ENCODE measurements at regions of chr10 and their contacts with region 1.

Region 1: DNA sequence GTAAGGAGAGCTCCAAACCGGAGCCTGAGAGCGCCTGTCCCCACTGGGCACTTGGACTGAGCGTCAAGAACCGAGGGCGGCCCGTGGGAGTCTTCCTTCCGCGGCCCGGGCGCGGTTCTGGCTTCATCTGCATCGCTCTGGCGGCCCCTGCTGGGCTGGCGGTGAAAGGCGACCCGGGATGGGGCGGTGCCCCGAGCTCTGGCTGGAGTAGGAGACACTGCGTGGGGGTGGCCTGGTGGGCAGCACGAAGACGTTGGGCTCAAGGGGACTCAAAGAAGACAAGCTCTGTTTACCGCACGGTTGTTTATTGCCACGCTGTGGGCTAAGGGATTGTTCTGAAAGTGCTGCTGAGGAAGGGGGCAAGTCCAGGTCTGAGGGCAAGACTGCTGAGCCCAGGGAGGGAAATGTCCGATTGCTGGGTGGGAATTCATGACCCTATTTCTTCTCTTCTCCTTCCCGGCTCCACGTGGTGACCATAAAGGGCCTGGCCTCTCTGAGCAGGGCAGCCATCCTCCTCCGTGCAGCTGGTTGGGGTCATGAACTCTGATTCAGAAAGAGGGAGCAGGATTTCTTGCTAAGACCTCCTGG is 29.8 kb downstream of the PLAU start:
- DNase-seq: no peak
- ATAC-seq: peak; percentile 100
- H3K4me3 ChIP-seq: no peak overlapping the region
- H3K27ac ChIP-seq: no peak overlapping the region
- H3K4me1 ChIP-seq: no peaks in the 10 kb centered on the region
- H3K27me3 ChIP-seq: no peaks in the 10 kb centered on the region
- CTCF ChIP-seq: peak; percentile 92 to 99 (median 97)
- EP300 ChIP-seq: no peak
- POLR2A ChIP-seq: no peak
- RAD21 ChIP-seq: peak; percentile 98

Region 2: GRCh38 chr10:73865459-73866442 is 75.0 kb before region 1 on chr10:
- CTCF ChIA-PET with region 1: interaction called, 10 read pairs
- POLR2A ChIA-PET with region 1: no interaction called
- RAD21 ChIA-PET with region 1: no interaction called
- SMC1A ChIA-PET with region 1: interaction called, 3 read pairs
- in situ Hi-C with region 1: no loop called
- intact Hi-C with region 1: no loop called
- DNase-seq: no peak
- ATAC-seq: peak; percentile 95
- H3K4me3 ChIP-seq: peak overlapping the region; percentile 58; the same call in 1 of the 2 replicates
- H3K27ac ChIP-seq: peak overlapping the region; percentile 84
- H3K4me1 ChIP-seq: peaks cover 24% of the 10 kb centered on the region
- H3K27me3 ChIP-seq: no peaks in the 10 kb centered on the region
- CTCF ChIP-seq: peak in 1 of 3 experiments; percentile 14; a peak in 1 of 6 replicates
- EP300 ChIP-seq: 0 out of 4 replicates have a peak, but pooled peaks of 1 of the 2 experiments have one; percentile 33
- POLR2A ChIP-seq: no peak
- RAD21 ChIP-seq: no peak

Region 3: DNA sequence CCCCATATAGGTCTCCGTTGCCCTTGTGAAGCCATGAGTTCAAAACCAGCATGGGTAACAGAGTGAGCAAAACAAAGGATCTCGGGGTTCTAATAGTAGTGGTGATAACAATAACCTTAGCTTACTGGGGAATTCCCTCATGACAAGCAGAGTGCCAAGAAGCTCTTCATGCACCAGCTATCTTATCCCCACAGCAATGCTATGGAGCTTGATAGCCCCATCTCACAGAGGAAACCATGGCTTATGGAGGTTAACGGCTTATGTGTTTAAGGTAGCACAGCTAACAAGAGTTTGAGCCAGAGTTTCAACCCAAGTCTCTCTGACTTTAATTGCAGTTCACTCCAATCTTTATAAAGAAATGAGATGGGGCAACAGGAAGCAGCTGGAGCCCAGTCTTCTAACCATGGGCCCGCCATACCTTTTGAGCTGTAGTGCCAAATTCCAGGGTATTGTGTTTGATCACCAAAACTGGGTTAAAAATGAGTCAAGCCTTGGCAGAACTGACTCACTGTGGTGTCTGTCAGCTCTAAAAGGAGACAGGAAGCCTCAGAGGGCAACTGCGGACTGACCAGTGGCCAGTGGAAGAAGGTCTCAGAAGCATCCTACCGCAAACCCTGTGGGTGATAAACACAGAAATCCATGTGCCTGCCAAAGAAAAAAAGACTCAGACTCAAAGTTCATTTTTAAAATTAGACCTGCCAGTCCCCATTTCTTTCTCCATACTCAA is 46.3 kb before region 1 on chr10:
- CTCF ChIA-PET with region 1: interaction called, 930 read pairs
- POLR2A ChIA-PET with region 1: interaction called, 32 read pairs
- RAD21 ChIA-PET with region 1: interaction called, 616 read pairs
- SMC1A ChIA-PET with region 1: interaction called, 1,048 read pairs
- in situ Hi-C with region 1: loop called (anchors 5 kb)
- intact Hi-C with region 1: no loop called
- DNase-seq: no peak
- ATAC-seq: peak; percentile 87
- H3K4me3 ChIP-seq: no peak overlapping the region
- H3K27ac ChIP-seq: no peak overlapping the region
- H3K4me1 ChIP-seq: no peaks in the 10 kb centered on the region
- H3K27me3 ChIP-seq: no peaks in the 10 kb centered on the region
- CTCF ChIP-seq: no peak
- EP300 ChIP-seq: no peak
- POLR2A ChIP-seq: no peak
- RAD21 ChIP-seq: no peak

Region 4: DNA sequence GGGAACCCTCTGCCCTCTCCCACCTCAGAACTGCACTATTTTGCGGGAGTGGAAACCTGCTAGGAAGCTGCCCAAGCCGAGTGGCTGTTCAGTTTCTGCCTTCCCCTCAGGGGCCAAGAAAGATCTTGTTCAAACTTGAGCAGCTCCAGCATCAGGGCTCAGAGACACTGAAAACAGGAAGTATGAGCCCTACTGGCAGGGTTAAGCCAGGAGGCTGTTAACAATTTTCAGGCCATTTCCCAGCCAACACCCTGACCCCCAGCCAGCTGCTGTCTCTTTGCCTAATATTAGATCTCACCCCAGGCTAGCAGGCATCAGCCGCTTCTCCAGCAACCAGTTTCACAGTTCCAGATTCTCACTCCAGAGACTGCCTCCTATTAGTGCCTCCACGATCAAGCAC is 20.6 kb before region 1 on chr10:
- CTCF ChIA-PET with region 1: interaction called, 35 read pairs
- POLR2A ChIA-PET with region 1: no interaction called
- RAD21 ChIA-PET with region 1: interaction called, 13 read pairs
- SMC1A ChIA-PET with region 1: interaction called, 15 read pairs
- in situ Hi-C with region 1: no loop called
- intact Hi-C with region 1: no loop called
- DNase-seq: no peak
- ATAC-seq: peak; percentile 85
- H3K4me3 ChIP-seq: no peak overlapping the region
- H3K27ac ChIP-seq: no peak overlapping the region
- H3K4me1 ChIP-seq: peaks cover 6% of the 10 kb centered on the region; the same call in 1 of the 2 replicates
- H3K27me3 ChIP-seq: no peaks in the 10 kb centered on the region
- CTCF ChIP-seq: no peak
- EP300 ChIP-seq: no peak
- POLR2A ChIP-seq: no peak
- RAD21 ChIP-seq: no peak

Region 5: DNA sequence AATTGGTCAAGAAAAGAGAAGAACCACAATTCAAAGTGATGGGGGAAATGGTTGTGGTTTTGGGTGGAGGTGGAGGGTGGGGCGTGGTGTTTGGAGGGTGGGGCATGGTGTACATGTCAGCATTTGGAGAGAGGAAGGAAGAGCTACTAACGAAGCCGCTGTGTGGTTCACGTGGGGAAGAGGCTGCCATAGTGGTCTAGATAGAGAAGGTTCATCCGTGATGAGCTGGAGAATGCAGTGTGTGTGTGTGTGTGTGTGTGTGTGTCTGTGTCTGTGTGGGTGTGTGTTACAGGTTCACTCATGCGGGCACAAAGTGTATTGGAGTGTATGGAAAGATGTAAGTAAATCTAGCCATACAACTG is 51.1 kb after region 1 on chr10:
- CTCF ChIA-PET with region 1: interaction called, 7 read pairs
- POLR2A ChIA-PET with region 1: no interaction called
- RAD21 ChIA-PET with region 1: interaction called, 6 read pairs
- SMC1A ChIA-PET with region 1: interaction called, 11 read pairs
- in situ Hi-C with region 1: no loop called
- intact Hi-C with region 1: no loop called
- DNase-seq: no peak
- ATAC-seq: peak; percentile 96
- H3K4me3 ChIP-seq: no peak overlapping the region
- H3K27ac ChIP-seq: no peak overlapping the region
- H3K4me1 ChIP-seq: peaks cover 13% of the 10 kb centered on the region
- H3K27me3 ChIP-seq: no peaks in the 10 kb centered on the region
- CTCF ChIP-seq: no peak
- EP300 ChIP-seq: no peak
- POLR2A ChIP-seq: no peak
- RAD21 ChIP-seq: no peak

Region 6: GRCh38 chr10:74081192-74081803 is 140.6 kb after region 1 on chr10:
- CTCF ChIA-PET with region 1: interaction called, 102 read pairs
- POLR2A ChIA-PET with region 1: interaction called, 3 read pairs
- RAD21 ChIA-PET with region 1: interaction called, 18 read pairs
- SMC1A ChIA-PET with region 1: interaction called, 45 read pairs
- in situ Hi-C with region 1: no loop called
- intact Hi-C with region 1: no loop called
- DNase-seq: no peak
- ATAC-seq: peak; percentile 37; the same call in 2 of the 3 replicates
- H3K4me3 ChIP-seq: no peak overlapping the region
- H3K27ac ChIP-seq: no peak overlapping the region
- H3K4me1 ChIP-seq: peaks cover 36% of the 10 kb centered on the region
- H3K27me3 ChIP-seq: no peaks in the 10 kb centered on the region
- CTCF ChIP-seq: peak; percentile 70 to 77 (median 71)
- EP300 ChIP-seq: no peak
- POLR2A ChIP-seq: no peak
- RAD21 ChIP-seq: peak; percentile 83

Measured in GM12878 (cell line).